Left ventricle myocardium inferior (tissue), 1 donor: ENCODE measurements at regions of chr3 and their contacts with region 1.

Region 1: GRCh38 chr3:39288300-39288808 is 8.5 kb upstream of the CX3CR1 start:
- DNase-seq: peak; percentile 66
- H3K4me3 ChIP-seq: no peak overlapping the region
- H3K27ac ChIP-seq: no peak overlapping the region
- H3K4me1 ChIP-seq: no peaks in the 10 kb centered on the region
- H3K27me3 ChIP-seq: no peaks in the 10 kb centered on the region
- CTCF ChIP-seq: peak; percentile 96

Region 2: GRCh38 chr3:38969317-38970235 is 318.8 kb before region 1 on chr3:
- intact Hi-C with region 1: no loop called
- DNase-seq: no peak
- H3K4me3 ChIP-seq: no peak overlapping the region
- H3K27ac ChIP-seq: no peak overlapping the region
- H3K4me1 ChIP-seq: peaks cover 7% of the 10 kb centered on the region
- H3K27me3 ChIP-seq: peaks cover 13% of the 10 kb centered on the region
- CTCF ChIP-seq: no peak

Region 3: GRCh38 chr3:39126532-39127071 is 161.8 kb before region 1 on chr3:
- intact Hi-C with region 1: loop called (anchors 5 kb)
- DNase-seq: no peak
- H3K4me3 ChIP-seq: no peak overlapping the region
- H3K27ac ChIP-seq: no peak overlapping the region
- H3K4me1 ChIP-seq: peaks cover 11% of the 10 kb centered on the region
- H3K27me3 ChIP-seq: no peaks in the 10 kb centered on the region
- CTCF ChIP-seq: peak; percentile 76

Region 4: GRCh38 chr3:39189959-39190269 is 98.4 kb before region 1 on chr3:
- intact Hi-C with region 1: loop called (anchors 5 kb)
- DNase-seq: no peak
- H3K4me3 ChIP-seq: peak overlapping the region; percentile 67
- H3K27ac ChIP-seq: peak overlapping the region; percentile 89
- H3K4me1 ChIP-seq: peaks cover 67% of the 10 kb centered on the region
- H3K27me3 ChIP-seq: no peaks in the 10 kb centered on the region
- CTCF ChIP-seq: peak; percentile 84

Region 5: GRCh38 chr3:39208463-39209055 is 79.8 kb before region 1 on chr3:
- intact Hi-C with region 1: loop called (anchors 5 kb)
- DNase-seq: peak; percentile 41
- H3K4me3 ChIP-seq: no peak overlapping the region
- H3K27ac ChIP-seq: peak overlapping the region; percentile 48
- H3K4me1 ChIP-seq: peaks cover 9% of the 10 kb centered on the region
- H3K27me3 ChIP-seq: no peaks in the 10 kb centered on the region
- CTCF ChIP-seq: peak; percentile 78